ENCODE measurements at regions of chr4 and their contacts with region 1.

Region 1: DNA sequence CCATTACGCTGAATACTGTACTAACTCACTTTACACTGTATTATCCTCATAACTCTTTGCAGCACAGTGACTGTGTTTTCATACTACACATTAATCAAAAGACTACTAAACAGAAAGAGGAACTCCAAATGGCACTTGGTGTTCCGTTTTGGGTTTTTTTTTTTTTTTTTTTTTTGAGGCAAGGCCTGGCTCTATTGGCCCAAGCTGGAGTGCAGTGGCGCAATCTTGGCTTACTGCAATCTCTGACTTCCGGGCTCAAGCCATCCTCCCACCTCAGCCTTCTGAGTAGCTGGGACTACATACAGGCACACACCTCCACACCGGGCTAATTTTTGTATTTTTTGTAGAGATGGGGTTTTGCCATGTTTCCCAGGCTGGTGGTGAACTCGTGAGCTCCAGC is 10.7 kb downstream of the KLHL8 start:
- DNase-seq: no peak
- H3K4me3 ChIP-seq: no peak overlapping the region
- H3K27ac ChIP-seq: no peak overlapping the region
- H3K4me1 ChIP-seq: no peaks in the 10 kb centered on the region
- H3K27me3 ChIP-seq: no peaks in the 10 kb centered on the region
- CTCF ChIP-seq: no peak

Region 2: GRCh38 chr4:87093443-87094123 is 116.1 kb before region 1 on chr4:
- CTCF ChIA-PET with region 1: no interaction called
- POLR2A ChIA-PET with region 1: interaction called, 38 read pairs
- intact Hi-C with region 1: no loop called
- DNase-seq: no peak
- H3K4me3 ChIP-seq: no peak overlapping the region
- H3K27ac ChIP-seq: peak overlapping the region; percentile 82
- H3K4me1 ChIP-seq: peaks cover 27% of the 10 kb centered on the region
- H3K27me3 ChIP-seq: no peaks in the 10 kb centered on the region
- CTCF ChIP-seq: peak; percentile 50